ENCODE measurements at regions of chr19 and their contacts with region 1.

Region 1: GRCh38 chr19:41753936-41754529 is 1.3 kb upstream of the CEACAM6 start:
- DNase-seq: peak; percentile 45
- H3K4me3 Mint-ChIP-seq: no peak overlapping the region
- H3K27ac Mint-ChIP-seq: peak overlapping the region; percentile 25
- H3K4me1 Mint-ChIP-seq: peaks cover 5% of the 10 kb centered on the region
- H3K27me3 Mint-ChIP-seq: peaks cover 42% of the 10 kb centered on the region

Region 2: GRCh38 chr19:41439441-41440222 is 314.4 kb before region 1 on chr19 and contains the start of gene DMAC2:
- intact Hi-C with region 1: no loop called
- DNase-seq: peak; percentile 93
- H3K4me3 Mint-ChIP-seq: no peak within 1 kb of the TSS
- H3K27ac Mint-ChIP-seq: no peak within 1 kb of the TSS
- H3K4me1 Mint-ChIP-seq: peaks cover 5% of the 10 kb centered on the region
- H3K27me3 Mint-ChIP-seq: peaks cover 5% of the 10 kb centered on the region
- total RNA-seq, gene DMAC2: 56.7 and 57.3 TPM in 2 replicates

Region 3: DNA sequence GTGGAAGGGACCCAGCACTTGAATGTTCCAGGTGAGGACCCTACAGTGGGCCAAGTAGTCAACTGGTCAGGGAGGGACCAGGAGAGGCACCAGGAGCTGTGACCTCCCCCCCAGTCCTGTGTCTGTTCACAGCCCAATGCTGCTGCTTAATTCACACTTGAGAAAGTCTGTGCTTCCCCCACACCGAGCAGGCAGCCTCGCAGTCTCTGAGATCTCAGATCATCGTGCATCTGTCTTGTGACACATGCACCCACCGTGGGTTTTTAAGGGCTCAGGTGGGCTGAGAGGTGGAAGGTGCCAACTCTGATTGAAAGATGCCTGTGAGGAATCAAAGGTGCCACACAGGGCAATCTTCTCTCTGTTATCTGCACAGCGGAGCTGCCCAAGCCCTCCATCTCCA is 39.4 kb before region 1 on chr19:
- intact Hi-C with region 1: no loop called
- DNase-seq: no peak
- H3K4me3 Mint-ChIP-seq: no peak overlapping the region
- H3K27ac Mint-ChIP-seq: no peak overlapping the region
- H3K4me1 Mint-ChIP-seq: no peaks in the 10 kb centered on the region
- H3K27me3 Mint-ChIP-seq: peaks cover 18% of the 10 kb centered on the region

Region 4: GRCh38 chr19:41785653-41786052 is 31.6 kb after region 1 on chr19:
- intact Hi-C with region 1: loop called (anchors 1 kb)
- DNase-seq: peak; percentile 65
- H3K4me3 Mint-ChIP-seq: no peak overlapping the region
- H3K27ac Mint-ChIP-seq: no peak overlapping the region
- H3K4me1 Mint-ChIP-seq: peaks cover 18% of the 10 kb centered on the region
- H3K27me3 Mint-ChIP-seq: peaks cover 63% of the 10 kb centered on the region

Region 5: DNA sequence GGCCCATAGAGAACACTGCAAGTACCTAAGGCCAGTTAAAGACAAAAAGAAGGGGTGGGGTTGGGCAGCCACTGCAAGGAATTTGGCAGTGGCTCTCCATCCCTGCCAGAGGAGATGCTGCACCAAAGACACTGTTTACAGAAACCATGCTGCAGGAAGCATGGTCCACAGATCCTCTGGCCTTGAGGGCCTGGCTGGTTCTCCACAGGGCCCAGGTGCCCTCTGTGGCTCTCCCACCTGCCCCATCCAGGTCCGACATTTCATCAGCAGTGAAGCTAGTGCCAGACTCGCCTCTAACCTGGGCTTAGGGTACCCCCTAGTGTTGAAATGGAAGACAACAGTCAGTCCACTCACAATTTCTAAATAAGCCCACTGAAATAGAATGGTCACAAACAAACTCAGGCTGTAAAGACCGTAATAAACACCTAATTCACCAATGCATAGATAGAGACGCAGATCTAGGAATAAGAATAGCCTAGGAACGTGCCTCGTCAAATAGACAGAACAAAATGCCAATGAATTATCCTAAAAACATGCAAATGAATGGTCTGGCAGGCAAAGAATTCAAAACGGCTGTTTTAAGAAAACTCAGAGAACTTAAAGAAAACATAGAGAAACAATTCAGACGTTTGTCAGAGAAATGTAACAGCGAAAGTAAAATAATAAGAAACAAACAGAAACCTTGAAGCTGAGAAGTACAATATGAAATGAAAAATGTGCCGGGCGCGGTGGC is 67.1 kb after region 1 on chr19:
- intact Hi-C with region 1: loop called (anchors 1 kb)
- DNase-seq: peak; percentile 53
- H3K4me3 Mint-ChIP-seq: no peak overlapping the region
- H3K27ac Mint-ChIP-seq: no peak overlapping the region
- H3K4me1 Mint-ChIP-seq: peaks cover 4% of the 10 kb centered on the region
- H3K27me3 Mint-ChIP-seq: peaks cover 38% of the 10 kb centered on the region